H1 (cell line): ENCODE measurements at regions of chr6 and their contacts with region 1.

Region 1: DNA sequence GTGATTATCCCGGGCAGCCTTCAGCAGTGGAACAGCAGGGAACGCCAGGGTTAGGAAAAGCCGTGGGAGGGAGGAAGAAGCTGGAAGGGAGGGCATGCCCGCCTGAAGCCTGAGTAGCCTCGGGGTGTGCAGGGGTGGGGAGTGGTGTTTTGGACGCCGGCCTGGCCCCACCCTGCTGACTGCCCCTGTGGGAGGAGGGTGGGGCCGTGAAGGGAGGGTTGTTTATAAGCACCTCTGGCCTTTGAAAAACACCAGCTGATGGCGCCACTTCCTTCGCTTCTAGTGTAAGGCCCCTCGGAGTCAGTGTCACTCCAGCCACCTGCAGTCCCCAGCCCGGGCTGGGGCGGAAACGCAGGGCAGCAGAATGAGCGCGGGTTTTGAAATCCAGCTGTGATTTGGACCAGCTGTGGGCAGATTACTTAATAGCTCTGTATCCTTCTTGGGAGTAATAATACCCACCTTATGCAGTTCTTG is 52.8 kb upstream of the BMP6 start:
- DNase-seq: peak; percentile 25 to 74
- H3K4me3 ChIP-seq: peak overlapping the region in 3 of 4 experiments; percentile 4 to 48 (median 26); a peak in 5 of 8 replicates
- H3K27ac ChIP-seq: no peak overlapping the region
- H3K4me1 ChIP-seq: peaks cover 0 to 4% (median under 1%) of the 10 kb centered on the region in 4 experiments; a peak in 2 of 7 replicates
- H3K27me3 ChIP-seq: no peaks in the 10 kb centered on the region
- CTCF ChIP-seq: peak; percentile 17 to 62 (median 60)
- EP300 ChIP-seq: no peak
- POLR2A ChIP-seq: no peak
- RAD21 ChIP-seq: peak; percentile 70 to 79

Region 2: GRCh38 chr6:7312616-7313504 is 360.2 kb before region 1 on chr6 and contains the start of gene SSR1:
- CTCF ChIA-PET with region 1: no interaction called
- POLR2A ChIA-PET with region 1: no interaction called
- DNase-seq: peak; percentile 85 to 95
- H3K4me3 ChIP-seq: peak within 1 kb of the TSS; percentile 66 to 97 (median 83)
- H3K27ac ChIP-seq: peak within 1 kb of the TSS; percentile 69; the same call in 1 of the 2 replicates
- H3K4me1 ChIP-seq: no peaks in the 10 kb centered on the region; a peak in 1 of 7 replicates
- H3K27me3 ChIP-seq: no peaks in the 10 kb centered on the region
- CTCF ChIP-seq: no peak
- EP300 ChIP-seq: 0 out of 3 replicates have a peak, but pooled peaks of 1 of the 2 experiments have one; percentile 18
- POLR2A ChIP-seq: peak; percentile 63 to 89
- RAD21 ChIP-seq: no peak
- total RNA-seq, gene SSR1: 98.9 and 117 TPM in 2 replicates

Region 3: DNA sequence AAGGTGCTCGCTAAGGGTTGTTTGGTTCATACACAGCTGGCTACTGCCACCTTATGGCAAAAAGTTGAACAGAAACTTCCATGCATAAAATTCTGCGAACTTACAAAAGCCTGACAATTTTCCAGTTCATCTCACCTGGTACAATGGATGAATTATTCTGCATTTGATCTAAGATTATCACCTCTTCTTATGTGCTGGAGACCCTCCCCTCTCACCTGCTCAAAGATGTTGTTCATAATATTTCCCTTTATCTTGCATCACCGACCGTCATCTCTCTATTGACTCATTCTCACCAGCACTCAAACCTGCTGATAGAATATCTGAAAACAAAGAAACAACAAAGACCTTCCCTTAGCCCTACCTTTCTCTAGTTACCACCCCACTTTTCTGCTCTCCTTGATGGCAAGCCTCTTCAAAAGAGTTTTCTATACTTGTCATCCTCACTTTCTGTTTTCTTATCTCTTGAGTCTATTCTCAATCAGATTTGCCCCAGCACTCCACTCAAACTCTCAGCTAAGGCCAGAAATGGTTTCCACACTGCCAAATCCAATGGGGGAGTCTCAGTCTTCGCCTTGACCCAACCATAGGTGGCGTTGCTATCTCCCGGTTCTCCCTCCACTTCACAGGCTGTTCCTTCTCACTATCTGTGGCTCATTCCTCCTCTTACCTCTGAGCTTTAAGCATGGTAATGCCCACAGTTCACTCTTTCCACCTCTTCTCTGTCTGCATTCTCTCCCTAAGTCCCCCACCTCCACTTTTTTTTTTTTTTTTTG is 57.3 kb before region 1 on chr6:
- CTCF ChIA-PET with region 1: interaction called, 10 read pairs
- POLR2A ChIA-PET with region 1: no interaction called
- DNase-seq: peak in 1 of 2 experiments; percentile 58
- H3K4me3 ChIP-seq: no peak overlapping the region
- H3K27ac ChIP-seq: no peak overlapping the region
- H3K4me1 ChIP-seq: no peaks in the 10 kb centered on the region
- H3K27me3 ChIP-seq: no peaks in the 10 kb centered on the region
- CTCF ChIP-seq: peak; percentile 58 to 73 (median 72)
- EP300 ChIP-seq: no peak
- POLR2A ChIP-seq: no peak
- RAD21 ChIP-seq: peak; percentile 85 to 88

Region 4: GRCh38 chr6:7640607-7641577 is 32.2 kb before region 1 on chr6:
- CTCF ChIA-PET with region 1: interaction called, 14 read pairs
- POLR2A ChIA-PET with region 1: no interaction called
- DNase-seq: no peak
- H3K4me3 ChIP-seq: no peak overlapping the region
- H3K27ac ChIP-seq: no peak overlapping the region
- H3K4me1 ChIP-seq: no peaks in the 10 kb centered on the region
- H3K27me3 ChIP-seq: peaks cover 0 to 3% (median 0%) of the 10 kb centered on the region in 4 experiments; a peak in 1 of 7 replicates
- CTCF ChIP-seq: peak in 1 of 3 experiments; percentile 37; a peak in 1 of 4 replicates
- EP300 ChIP-seq: no peak
- POLR2A ChIP-seq: no peak
- RAD21 ChIP-seq: peak in 1 of 2 experiments; percentile 38; a peak in 2 of 4 replicates

Region 5: DNA sequence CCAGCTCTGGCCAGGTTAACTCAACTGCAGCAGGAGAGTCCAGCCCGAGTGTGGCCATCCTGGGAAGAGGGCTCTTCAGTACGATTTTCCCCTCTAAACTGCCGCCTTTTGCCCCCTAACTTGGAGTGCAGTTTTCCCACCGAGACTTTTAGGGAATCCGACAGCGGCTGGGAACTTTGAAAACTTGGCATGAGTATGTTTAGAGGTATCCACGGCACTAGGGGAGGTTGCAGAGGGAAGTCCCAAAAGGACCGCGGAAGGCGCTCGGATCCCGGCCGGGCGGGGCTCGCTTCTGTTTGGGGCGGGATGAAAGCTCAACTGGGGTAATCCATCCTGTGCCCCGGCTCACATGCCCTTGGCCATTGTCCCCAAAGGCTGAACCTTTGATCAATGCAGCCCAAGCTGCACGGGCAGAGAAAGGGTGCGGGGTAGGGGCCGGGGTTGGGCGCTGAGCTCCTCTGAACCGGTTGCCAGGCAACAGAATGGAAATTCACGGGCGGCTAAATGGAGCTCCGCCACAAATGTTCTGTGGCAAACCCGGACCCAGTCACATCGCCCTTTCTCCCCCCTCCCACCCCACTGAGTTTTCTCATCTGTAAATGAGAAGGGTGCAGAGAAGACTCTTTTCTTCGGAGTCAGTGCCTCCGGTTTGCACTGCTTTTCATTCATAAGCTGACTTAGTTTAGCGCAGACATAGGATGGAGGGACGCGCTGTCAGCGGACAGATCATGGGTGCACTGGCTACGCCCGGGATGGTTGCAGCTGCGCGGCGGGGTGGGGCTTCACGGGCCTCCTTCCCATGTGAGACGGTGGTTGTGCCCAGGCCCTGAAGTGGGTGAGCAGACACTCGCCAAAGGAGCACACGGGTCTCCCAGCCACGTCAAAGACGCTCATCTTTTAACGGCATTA is 55.1 kb after region 1 on chr6:
- CTCF ChIA-PET with region 1: interaction called, 14 read pairs
- POLR2A ChIA-PET with region 1: interaction called, 5 read pairs
- DNase-seq: peak in 1 of 2 experiments; percentile 77
- H3K4me3 ChIP-seq: peak overlapping the region; percentile 27 to 65 (median 44); a peak in 7 of 8 replicates
- H3K27ac ChIP-seq: no peak overlapping the region
- H3K4me1 ChIP-seq: peaks cover 9 to 20% (median 12%) of the 10 kb centered on the region in 4 experiments; a peak in 6 of 7 replicates
- H3K27me3 ChIP-seq: peaks cover 54 to 69% (median 63%) of the 10 kb centered on the region in 4 experiments
- CTCF ChIP-seq: no peak
- EP300 ChIP-seq: no peak
- POLR2A ChIP-seq: no peak
- RAD21 ChIP-seq: no peak

Region 6: GRCh38 chr6:7813704-7814103 is 140.6 kb after region 1 on chr6:
- CTCF ChIA-PET with region 1: interaction called, 11 read pairs
- POLR2A ChIA-PET with region 1: interaction called, 5 read pairs
- DNase-seq: no peak
- H3K4me3 ChIP-seq: no peak overlapping the region
- H3K27ac ChIP-seq: no peak overlapping the region
- H3K4me1 ChIP-seq: no peaks in the 10 kb centered on the region
- H3K27me3 ChIP-seq: no peaks in the 10 kb centered on the region
- CTCF ChIP-seq: peak; percentile 42 to 56 (median 54)
- EP300 ChIP-seq: no peak
- POLR2A ChIP-seq: no peak
- RAD21 ChIP-seq: peak; percentile 50 to 63